ENCODE measurements at regions of chr11 and their contacts with region 1.

Region 1: GRCh38 chr11:61187505-61188130 is 15.7 kb upstream of the PGA3 start:
- DNase-seq: peak; percentile 62
- H3K4me3 Mint-ChIP-seq: no peak overlapping the region
- H3K27ac Mint-ChIP-seq: no peak overlapping the region
- H3K4me1 Mint-ChIP-seq: peaks cover 5% of the 10 kb centered on the region
- H3K27me3 Mint-ChIP-seq: peaks cover 16% of the 10 kb centered on the region

Region 2: GRCh38 chr11:60913793-60914632 is 273.6 kb before region 1 on chr11 and contains the start of gene TMEM109:
- intact Hi-C with region 1: loop called (anchors 1 kb)
- DNase-seq: peak; percentile 85
- H3K4me3 Mint-ChIP-seq: peak within 1 kb of the TSS; percentile 99
- H3K27ac Mint-ChIP-seq: peak within 1 kb of the TSS; percentile 99
- H3K4me1 Mint-ChIP-seq: peaks cover 56% of the 10 kb centered on the region
- H3K27me3 Mint-ChIP-seq: peaks cover 4% of the 10 kb centered on the region
- total RNA-seq, gene TMEM109: 112 and 120 TPM in 2 replicates

Region 3: DNA sequence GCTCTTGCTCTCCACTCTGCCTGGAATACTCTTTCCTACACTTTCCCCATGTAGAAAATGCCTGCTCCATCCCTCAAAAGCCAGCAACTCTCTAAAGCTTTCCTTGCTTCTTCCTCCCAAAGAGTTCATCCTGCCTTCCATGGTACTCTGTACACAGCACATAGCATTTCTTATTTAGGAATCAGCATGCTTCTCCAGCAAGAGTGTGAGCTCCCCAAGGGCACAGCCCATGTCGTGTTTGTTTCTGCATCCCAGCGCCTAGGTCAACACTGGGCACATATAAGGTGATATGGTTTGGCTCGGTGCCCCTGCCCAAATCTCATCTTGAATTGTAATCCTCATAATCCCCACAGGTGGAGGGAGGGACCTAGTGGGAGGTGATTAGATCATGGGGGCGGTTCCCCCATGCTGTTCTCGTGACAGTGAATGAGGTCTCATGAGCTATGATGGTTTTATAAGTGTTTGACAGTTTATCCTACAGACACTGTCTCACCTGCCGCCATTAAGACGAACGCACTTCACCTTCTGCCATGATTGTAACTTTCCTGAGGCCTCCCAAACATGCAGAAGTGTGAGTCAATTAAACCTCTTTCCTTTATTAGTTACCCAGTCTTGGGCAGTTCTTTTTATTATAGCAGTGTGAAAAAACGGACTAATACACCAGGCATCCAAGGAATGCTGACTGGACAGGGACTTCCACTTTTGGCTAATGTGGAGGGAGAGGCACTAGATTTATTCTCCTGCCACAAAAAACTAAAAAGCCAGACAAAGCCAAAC is 34.6 kb before region 1 on chr11:
- intact Hi-C with region 1: no loop called
- DNase-seq: no peak
- H3K4me3 Mint-ChIP-seq: no peak overlapping the region
- H3K27ac Mint-ChIP-seq: no peak overlapping the region
- H3K4me1 Mint-ChIP-seq: peaks cover 3% of the 10 kb centered on the region
- H3K27me3 Mint-ChIP-seq: no peaks in the 10 kb centered on the region

Measured in activated T-helper 2 cell treated with anti-CD3 and anti-CD28 coated beads, Interferon-gamma antibody, Interleukin-2, Interleukin-4, amounts not matched to agents 10 μg/mL and 5 μg/mL and 100 μg/mL, durations not matched to agents 14 hours and 24 hours and 36 hours (primary cell).